OCI-LY7 (cell line): ENCODE measurements at regions of chr18 and their contacts with region 1.

Region 1: GRCh38 chr18:33870059-33870458 is 292.0 kb downstream of the ASXL3 start:
- DNase-seq: no peak
- H3K4me3 ChIP-seq: no peak overlapping the region
- H3K27ac ChIP-seq: no peak overlapping the region
- H3K4me1 ChIP-seq: peaks cover 52% of the 10 kb centered on the region
- CTCF ChIP-seq: no peak

Region 2: DNA sequence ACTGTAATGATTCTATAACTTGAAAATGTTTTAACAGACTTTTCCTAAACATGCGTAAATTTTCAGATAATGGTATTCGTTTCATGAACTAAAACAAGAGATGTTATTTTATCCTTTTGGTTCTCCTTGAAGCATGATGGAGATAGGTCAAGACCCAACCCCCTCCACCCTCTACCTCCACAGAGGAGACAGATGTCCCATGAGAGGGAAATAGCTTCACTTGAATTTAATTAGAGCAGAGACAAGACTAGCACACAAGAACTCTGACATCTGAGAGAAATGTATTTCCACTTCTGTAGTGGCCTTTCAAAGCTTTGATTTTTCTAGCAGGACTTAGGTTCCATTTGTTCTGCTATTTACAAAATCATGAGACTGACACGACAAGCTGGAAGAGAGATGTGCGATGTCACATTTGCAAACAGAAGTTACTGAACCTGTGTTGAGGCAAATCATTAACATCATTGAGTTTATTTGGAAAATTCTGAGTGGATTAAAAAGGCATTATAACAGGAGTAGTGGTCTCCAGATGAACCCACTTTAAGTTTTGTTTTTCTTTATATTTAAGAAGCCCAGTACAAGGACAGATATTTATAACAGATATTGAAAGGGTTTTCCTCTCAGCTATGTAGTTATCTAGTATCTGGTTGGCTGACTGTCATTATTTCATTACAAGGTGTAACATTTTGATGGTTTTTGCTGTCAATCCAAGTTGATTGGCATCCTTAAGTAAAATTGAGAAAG is 15.8 kb before region 1 on chr18:
- CTCF ChIA-PET with region 1: interaction called, 4 read pairs
- POLR2A ChIA-PET with region 1: interaction called, 100 read pairs
- intact Hi-C with region 1: loop called (anchors 2 kb)
- DNase-seq: peak; percentile 81
- H3K4me3 ChIP-seq: peak overlapping the region; percentile 74
- H3K27ac ChIP-seq: peak overlapping the region; percentile 100
- H3K4me1 ChIP-seq: peaks cover 64% of the 10 kb centered on the region
- CTCF ChIP-seq: no peak

Region 3: GRCh38 chr18:33916200-33916599 is 46.1 kb after region 1 on chr18:
- CTCF ChIA-PET with region 1: no interaction called
- POLR2A ChIA-PET with region 1: interaction called, 6 read pairs
- intact Hi-C with region 1: loop called (anchors 5 kb)
- DNase-seq: no peak
- H3K4me3 ChIP-seq: no peak overlapping the region
- H3K27ac ChIP-seq: no peak overlapping the region
- H3K4me1 ChIP-seq: peaks cover 29% of the 10 kb centered on the region
- CTCF ChIP-seq: 0 out of 2 replicates have a peak, but pooled peaks have one; percentile 27

Region 4: DNA sequence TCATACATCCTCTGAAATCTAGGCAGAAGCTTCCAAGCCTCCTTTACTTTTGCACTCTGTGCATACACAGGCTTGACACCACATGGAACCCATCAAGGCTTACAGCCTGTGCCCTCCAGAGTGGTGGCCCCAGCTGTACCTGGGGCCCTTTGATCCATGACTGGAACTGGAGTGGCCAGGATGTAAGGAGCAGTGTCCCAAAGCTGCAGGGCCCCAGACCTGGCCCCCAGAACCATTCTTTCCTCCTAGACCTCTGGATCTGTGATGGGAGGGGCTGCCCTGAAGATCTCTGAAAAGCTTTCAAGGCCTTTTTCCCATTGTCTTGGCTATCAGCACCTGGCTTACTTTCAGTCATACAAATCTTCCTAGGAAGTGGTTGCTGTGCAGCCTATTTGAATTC is 417.8 kb after region 1 on chr18:
- CTCF ChIA-PET with region 1: no interaction called
- POLR2A ChIA-PET with region 1: no interaction called
- intact Hi-C with region 1: no loop called
- DNase-seq: no peak
- H3K4me3 ChIP-seq: no peak overlapping the region
- H3K27ac ChIP-seq: no peak overlapping the region
- H3K4me1 ChIP-seq: no peaks in the 10 kb centered on the region
- CTCF ChIP-seq: no peak

Region 5: DNA sequence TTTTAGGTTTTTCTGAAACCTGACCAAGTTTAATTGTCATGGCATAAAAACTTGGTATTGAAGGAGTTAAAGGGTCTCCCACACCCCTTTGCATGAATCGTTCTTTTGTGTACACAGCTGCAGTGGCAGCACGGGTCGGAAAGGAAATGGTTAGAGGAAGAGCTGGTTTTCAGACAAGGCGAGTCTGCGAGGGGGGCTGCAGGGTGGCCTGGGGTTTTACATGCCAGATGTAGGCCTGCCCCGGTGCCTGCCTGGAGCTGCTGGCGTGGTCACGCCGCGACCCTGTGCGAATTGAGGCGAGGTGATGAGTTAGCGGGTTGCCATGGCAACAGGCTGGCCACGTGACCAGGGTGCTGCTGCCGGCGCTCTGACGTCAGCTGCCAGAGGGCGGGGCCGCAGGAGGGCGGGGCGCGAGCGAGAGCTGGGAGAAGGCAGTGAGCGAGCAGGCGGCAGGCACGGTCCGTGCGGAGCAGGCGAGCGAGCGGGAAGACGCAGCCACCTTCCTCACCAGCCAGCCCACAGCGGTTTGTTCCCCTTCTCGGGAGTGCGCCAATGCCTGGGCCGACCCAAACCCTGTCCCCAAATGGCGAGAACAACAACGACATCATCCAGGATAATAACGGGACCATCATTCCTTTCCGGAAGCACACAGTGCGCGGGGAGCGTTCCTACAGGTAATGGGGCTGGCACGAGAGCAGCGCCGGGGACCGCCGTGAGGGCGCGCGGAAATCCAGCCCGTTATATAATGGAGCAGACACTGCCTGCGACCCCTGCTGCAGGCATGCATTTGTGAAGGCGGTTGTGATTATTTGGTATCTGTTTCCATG is 1171.1 kb after region 1 on chr18 and contains the start of gene MAPRE2:
- CTCF ChIA-PET with region 1: no interaction called
- POLR2A ChIA-PET with region 1: no interaction called
- intact Hi-C with region 1: loop called (anchors 10 kb)
- DNase-seq: peak; percentile 96
- H3K4me3 ChIP-seq: peak within 1 kb of the TSS; percentile 93
- H3K27ac ChIP-seq: peak within 1 kb of the TSS; percentile 91
- H3K4me1 ChIP-seq: peaks cover 49% of the 10 kb centered on the region
- CTCF ChIP-seq: no peak
- total RNA-seq, gene MAPRE2: 17.1 and 23.2 TPM in 2 replicates